K562 (cell line): ENCODE measurements at regions of chr13 and their contacts with region 1.

Region 1: DNA sequence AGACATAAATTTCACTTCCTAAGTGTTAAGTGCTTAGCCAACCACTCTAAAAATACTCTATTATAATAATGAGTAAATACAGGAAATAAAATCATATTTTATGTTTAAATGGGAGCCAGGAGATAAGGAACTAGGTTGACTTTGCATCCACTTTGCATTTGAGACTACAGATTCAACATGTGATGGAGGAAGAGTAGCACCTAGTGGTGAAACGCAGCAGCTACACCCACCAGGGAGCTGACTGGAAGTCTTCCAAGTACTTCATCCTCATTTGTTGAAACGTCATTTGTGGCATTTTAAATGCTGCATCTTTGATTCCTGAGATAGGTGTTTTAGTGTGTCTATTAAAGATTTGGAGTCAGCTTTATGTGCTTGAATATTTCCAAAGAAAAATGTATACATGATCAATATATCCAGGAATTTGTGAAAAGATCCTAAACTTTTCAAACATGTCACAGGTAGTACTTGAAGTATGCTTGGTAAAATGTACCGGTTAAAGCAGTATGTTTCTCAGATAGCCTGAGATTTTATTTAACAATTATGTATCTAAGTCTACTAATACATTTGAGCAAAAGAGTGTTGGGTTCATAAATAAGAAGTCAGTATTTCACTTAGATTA is 17.4 kb upstream of the KCTD12 start:
- DNase-seq: peak; percentile 53 to 68 (median 65)
- ATAC-seq: peak; percentile 89
- H3K4me3 ChIP-seq: no peak overlapping the region
- H3K27ac ChIP-seq: no peak overlapping the region
- H3K4me1 ChIP-seq: 0 out of 5 replicates have a peak, but pooled peaks cover 0 to 3% of the 10 kb centered on the region in 2 experiments
- H3K27me3 ChIP-seq: no peaks in the 10 kb centered on the region
- CTCF ChIP-seq: peak; percentile 64 to 87 (median 78)
- EP300 ChIP-seq: no peak
- POLR2A ChIP-seq: no peak
- RAD21 ChIP-seq: peak; percentile 72 to 83

Region 2: GRCh38 chr13:75687150-75687763 is 1216.4 kb before region 1 on chr13:
- CTCF ChIA-PET with region 1: no interaction called
- POLR2A ChIA-PET with region 1: no interaction called
- in situ Hi-C with region 1: loop called (anchors 25 kb)
- intact Hi-C with region 1: no loop called
- DNase-seq: peak; percentile 6 to 11 (median 9)
- ATAC-seq: peak; percentile 64; the same call in 2 of the 3 replicates
- H3K4me3 ChIP-seq: no peak overlapping the region
- H3K27ac ChIP-seq: no peak overlapping the region
- H3K4me1 ChIP-seq: no peaks in the 10 kb centered on the region
- H3K27me3 ChIP-seq: no peaks in the 10 kb centered on the region
- CTCF ChIP-seq: peak in 2 of 3 experiments; percentile 33 to 35; a peak in 1 of 6 replicates
- EP300 ChIP-seq: no peak
- POLR2A ChIP-seq: no peak
- RAD21 ChIP-seq: 0 out of 4 replicates have a peak, but pooled peaks of 1 of the 2 experiments have one; percentile 7

Region 3: GRCh38 chr13:75870397-75870903 is 1033.2 kb before region 1 on chr13:
- CTCF ChIA-PET with region 1: interaction called, 3 read pairs
- POLR2A ChIA-PET with region 1: no interaction called
- in situ Hi-C with region 1: loop called (anchors 25 kb)
- intact Hi-C with region 1: loop called (anchors 5 kb)
- DNase-seq: peak; percentile 12 to 26 (median 24)
- ATAC-seq: no peak; the same call in 2 of the 3 replicates
- H3K4me3 ChIP-seq: no peak overlapping the region
- H3K27ac ChIP-seq: no peak overlapping the region
- H3K4me1 ChIP-seq: no peaks in the 10 kb centered on the region
- H3K27me3 ChIP-seq: no peaks in the 10 kb centered on the region
- CTCF ChIP-seq: peak; percentile 35 to 62 (median 60); a peak in 5 of 6 replicates
- EP300 ChIP-seq: no peak
- POLR2A ChIP-seq: no peak
- RAD21 ChIP-seq: peak; percentile 58 to 70

Region 4: GRCh38 chr13:76038920-76039716 is 864.5 kb before region 1 on chr13:
- CTCF ChIA-PET with region 1: no interaction called
- POLR2A ChIA-PET with region 1: no interaction called
- in situ Hi-C with region 1: no loop called
- intact Hi-C with region 1: loop called (anchors 10 kb)
- DNase-seq: no peak
- ATAC-seq: no peak
- H3K4me3 ChIP-seq: no peak overlapping the region
- H3K27ac ChIP-seq: no peak overlapping the region
- H3K4me1 ChIP-seq: no peaks in the 10 kb centered on the region; a peak in 1 of 5 replicates
- H3K27me3 ChIP-seq: no peaks in the 10 kb centered on the region
- CTCF ChIP-seq: no peak
- EP300 ChIP-seq: no peak
- POLR2A ChIP-seq: no peak
- RAD21 ChIP-seq: no peak

Region 5: DNA sequence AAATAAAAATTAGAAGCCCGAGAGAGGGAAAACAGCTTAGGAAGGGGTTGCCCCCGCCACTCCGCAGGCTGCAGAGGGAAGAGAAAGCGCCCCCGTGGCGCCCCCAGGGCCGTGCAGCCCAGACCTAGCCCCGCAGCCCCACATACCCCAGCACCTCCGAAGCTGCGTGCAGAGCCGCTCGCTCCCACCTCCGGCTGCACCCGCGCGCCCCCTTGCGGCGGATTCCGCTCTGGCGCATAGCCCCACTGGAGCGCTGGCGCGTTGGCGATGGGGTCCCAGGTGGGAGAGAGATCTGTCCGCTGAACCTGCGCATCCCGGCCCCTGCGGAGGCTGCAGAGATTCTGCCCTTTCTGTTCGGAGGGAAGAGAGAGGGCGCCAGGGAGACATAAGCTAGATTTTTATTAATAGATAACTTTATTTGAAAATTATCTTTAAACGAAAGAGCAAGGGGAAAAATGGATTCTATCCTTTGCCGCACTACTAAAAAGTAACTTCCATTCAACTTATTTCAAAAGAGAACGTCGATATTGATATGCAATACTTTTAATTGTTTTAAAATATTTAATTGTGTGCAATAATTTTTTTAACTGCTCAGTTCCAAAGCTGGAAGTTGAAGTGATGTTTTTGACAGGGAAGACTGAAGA is 76.5 kb after region 1 on chr13:
- CTCF ChIA-PET with region 1: no interaction called
- POLR2A ChIA-PET with region 1: no interaction called
- in situ Hi-C with region 1: no loop called
- intact Hi-C with region 1: loop called (anchors 1 kb)
- DNase-seq: peak; percentile 75 to 83 (median 78)
- ATAC-seq: peak; percentile 100
- H3K4me3 ChIP-seq: no peak overlapping the region
- H3K27ac ChIP-seq: no peak overlapping the region
- H3K4me1 ChIP-seq: peaks cover 0 to 4% of the 10 kb centered on the region in 2 experiments; a peak in 2 of 5 replicates
- H3K27me3 ChIP-seq: peaks cover 0 to 11% of the 10 kb centered on the region in 2 experiments; a peak in 1 of 5 replicates
- CTCF ChIP-seq: peak; percentile 70 to 82 (median 77)
- EP300 ChIP-seq: no peak
- POLR2A ChIP-seq: no peak
- RAD21 ChIP-seq: peak; percentile 64 to 73